ENCODE measurements at regions of chr7 and their contacts with region 1.

Region 1: GRCh38 chr7:73858807-73859206 is 2.2 kb upstream of the TMEM270 start:
- DNase-seq: no peak
- H3K4me3 ChIP-seq: no peak overlapping the region
- H3K4me1 ChIP-seq: no peaks in the 10 kb centered on the region
- H3K27me3 ChIP-seq: peaks cover 2% of the 10 kb centered on the region; the same call in 1 of the 2 replicates

Region 2: GRCh38 chr7:73606801-73607691 is 251.8 kb before region 1 on chr7:
- in situ Hi-C with region 1: loop called (anchors 5 kb)
- DNase-seq: peak; percentile 39 to 86
- H3K4me3 ChIP-seq: no peak overlapping the region
- H3K4me1 ChIP-seq: no peaks in the 10 kb centered on the region
- H3K27me3 ChIP-seq: no peaks in the 10 kb centered on the region

Measured in HAP-1 (cell line).